ENCODE measurements at regions of chr2 and their contacts with region 1.

Region 1: DNA sequence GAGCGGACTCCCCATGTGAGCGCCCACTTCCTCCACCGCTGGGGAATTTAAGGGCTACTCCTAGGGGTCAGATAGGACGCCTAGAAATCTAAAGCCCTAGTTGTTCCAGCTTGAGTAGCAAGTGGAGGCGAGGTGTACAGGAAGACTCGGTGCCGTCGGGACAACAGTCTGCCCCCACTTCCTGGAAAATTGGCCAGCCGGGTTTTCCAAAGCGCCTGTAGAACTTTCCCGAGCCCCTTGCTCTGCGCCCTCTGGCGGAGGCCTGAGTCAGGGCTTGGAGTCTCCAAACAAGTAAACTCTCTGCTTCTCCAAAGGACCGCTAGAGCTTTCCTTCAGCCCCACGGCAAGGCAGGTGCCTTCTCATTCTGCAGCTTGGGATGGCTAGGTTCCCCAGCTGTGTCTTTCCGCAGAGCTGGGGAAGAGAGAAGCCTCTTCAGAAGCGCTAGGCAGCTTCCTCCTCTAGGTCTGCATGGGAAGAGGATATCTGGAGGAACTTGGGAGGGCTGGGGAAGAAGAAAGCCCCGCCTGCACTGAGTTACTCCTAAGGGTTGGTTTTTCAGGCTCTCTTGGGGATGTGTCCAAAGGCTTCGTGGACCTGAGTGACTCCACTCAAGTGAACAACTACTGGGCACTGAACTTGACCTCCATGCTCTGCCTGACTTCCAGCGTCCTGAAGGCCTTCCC is 688 bp downstream of the SPR start:
- DNase-seq: peak; percentile 84
- H3K4me3 ChIP-seq: peak overlapping the region; percentile 54 to 81 (median 73)
- H3K27ac ChIP-seq: peak overlapping the region; percentile 74
- H3K4me1 ChIP-seq: peaks cover 13% of the 10 kb centered on the region
- H3K27me3 ChIP-seq: no peaks in the 10 kb centered on the region
- CTCF ChIP-seq: peak; percentile 97 to 99
- POLR2A ChIP-seq: no peak

Region 2: DNA sequence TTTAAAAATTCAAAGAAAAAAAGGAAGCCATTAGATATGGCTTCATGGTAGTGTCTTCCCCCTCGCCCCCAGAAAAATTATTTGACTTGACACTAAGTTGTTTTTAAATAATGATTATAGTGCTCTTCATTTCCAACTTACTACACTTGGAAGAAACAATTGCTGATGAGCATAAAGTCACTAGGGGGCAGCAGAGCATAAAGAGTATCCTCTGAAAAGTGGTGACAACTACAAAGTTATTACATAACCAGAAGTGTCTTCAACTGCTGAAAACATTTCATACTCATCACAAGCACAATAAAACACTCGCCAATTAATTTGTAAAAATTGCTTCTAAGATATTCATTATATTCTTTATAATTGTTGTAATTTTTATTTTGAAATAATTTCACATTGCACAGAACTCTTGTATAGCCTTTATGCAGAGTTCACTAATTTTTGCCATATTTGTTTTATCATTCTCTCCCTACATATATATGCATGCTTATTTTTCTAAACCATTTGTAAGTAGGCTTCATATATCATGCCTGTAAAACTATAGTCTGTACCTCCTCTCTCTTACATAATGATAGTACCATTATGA is 116.9 kb before region 1 on chr2:
- CTCF ChIA-PET with region 1: interaction called, 15 read pairs
- POLR2A ChIA-PET with region 1: no interaction called
- dilution Hi-C with region 1: no loop called
- intact Hi-C with region 1: loop called (anchors 1 kb)
- DNase-seq: peak; percentile 84
- H3K4me3 ChIP-seq: no peak overlapping the region
- H3K27ac ChIP-seq: no peak overlapping the region
- H3K4me1 ChIP-seq: no peaks in the 10 kb centered on the region
- H3K27me3 ChIP-seq: no peaks in the 10 kb centered on the region
- CTCF ChIP-seq: peak; percentile 54 to 71
- POLR2A ChIP-seq: no peak

Region 3: DNA sequence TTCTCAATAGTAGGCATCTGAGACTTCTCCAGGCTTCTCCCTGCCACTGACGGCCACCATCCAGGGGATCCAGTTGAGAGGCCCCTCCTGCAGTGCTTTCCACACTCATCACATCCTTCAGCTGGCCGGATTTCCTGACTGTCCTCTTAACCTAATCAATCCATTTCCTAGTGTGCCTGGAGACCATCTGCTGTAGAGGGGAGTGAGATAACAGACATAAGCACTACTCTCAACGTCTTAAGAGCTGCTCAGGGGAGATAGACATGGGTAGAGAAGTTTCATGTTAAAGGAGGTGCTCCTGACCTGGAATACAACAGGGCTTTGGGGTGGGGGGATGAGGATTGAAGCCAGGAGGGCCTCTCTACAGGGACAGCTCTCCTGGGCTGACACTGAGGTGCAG is 13.5 kb after region 1 on chr2:
- CTCF ChIA-PET with region 1: interaction called, 13 read pairs
- POLR2A ChIA-PET with region 1: no interaction called
- dilution Hi-C with region 1: no loop called
- intact Hi-C with region 1: no loop called
- DNase-seq: no peak
- H3K4me3 ChIP-seq: no peak overlapping the region
- H3K27ac ChIP-seq: no peak overlapping the region
- H3K4me1 ChIP-seq: peaks cover 1% of the 10 kb centered on the region
- H3K27me3 ChIP-seq: peaks cover 26 to 51% of the 10 kb centered on the region in 2 experiments
- CTCF ChIP-seq: no peak
- POLR2A ChIP-seq: no peak

Region 4: DNA sequence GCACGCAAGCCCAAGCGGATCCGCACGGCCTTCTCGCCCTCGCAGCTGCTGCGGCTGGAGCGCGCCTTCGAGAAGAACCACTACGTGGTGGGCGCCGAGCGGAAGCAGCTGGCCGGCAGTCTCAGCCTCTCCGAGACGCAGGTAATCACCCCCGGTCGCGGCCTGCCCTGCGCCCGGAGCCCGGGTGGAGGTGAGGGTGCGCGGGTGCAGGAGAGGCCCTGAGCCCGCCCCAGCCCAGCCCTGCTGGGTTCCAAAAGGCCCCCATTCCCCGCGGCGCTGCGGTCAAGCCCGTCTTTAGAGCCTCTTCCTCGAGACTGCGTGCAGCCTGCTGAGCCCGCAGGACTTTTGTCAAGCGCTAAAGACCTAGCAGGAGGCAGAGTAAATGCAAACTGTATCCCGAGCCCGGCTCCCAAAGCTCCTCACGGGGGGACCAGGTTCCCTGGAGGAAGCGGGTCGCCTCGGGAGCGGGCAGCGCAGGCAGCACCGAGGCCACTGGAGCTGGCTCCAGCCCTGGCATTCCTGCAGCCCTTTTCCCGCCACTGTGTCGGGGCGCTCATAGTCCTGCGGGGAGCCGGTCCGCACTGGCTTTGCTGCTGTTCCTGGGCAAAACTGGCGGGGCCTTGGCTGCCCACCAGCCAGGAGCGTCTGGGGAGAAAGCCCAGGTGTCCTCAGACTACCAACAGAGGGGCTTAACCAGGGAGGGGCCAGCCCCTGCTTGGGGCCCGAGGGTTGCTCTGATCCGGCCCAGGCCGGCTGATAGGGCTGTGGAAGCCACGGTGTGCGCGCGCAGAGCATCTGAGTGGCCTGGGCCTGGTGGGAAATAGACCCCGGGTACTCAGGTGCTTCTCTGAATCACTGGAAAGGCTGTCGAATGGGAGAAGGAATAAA is 36.7 kb after region 1 on chr2:
- CTCF ChIA-PET with region 1: interaction called, 25 read pairs
- POLR2A ChIA-PET with region 1: no interaction called
- dilution Hi-C with region 1: no loop called
- intact Hi-C with region 1: loop called (anchors 2 kb)
- DNase-seq: no peak
- H3K4me3 ChIP-seq: no peak overlapping the region
- H3K27ac ChIP-seq: no peak overlapping the region
- H3K4me1 ChIP-seq: peaks cover 3% of the 10 kb centered on the region
- H3K27me3 ChIP-seq: peaks cover 93 to 100% of the 10 kb centered on the region in 2 experiments
- CTCF ChIP-seq: no peak
- POLR2A ChIP-seq: no peak

Region 5: GRCh38 chr2:72973566-72974435 is 85.9 kb after region 1 on chr2:
- CTCF ChIA-PET with region 1: interaction called, 178 read pairs
- POLR2A ChIA-PET with region 1: no interaction called
- dilution Hi-C with region 1: no loop called
- intact Hi-C with region 1: loop called (anchors 1 kb)
- DNase-seq: peak; percentile 46
- H3K4me3 ChIP-seq: no peak overlapping the region
- H3K27ac ChIP-seq: no peak overlapping the region
- H3K4me1 ChIP-seq: no peaks in the 10 kb centered on the region
- H3K27me3 ChIP-seq: no peaks in the 10 kb centered on the region
- CTCF ChIP-seq: peak; percentile 80 to 92
- POLR2A ChIP-seq: no peak

Region 6: GRCh38 chr2:73085691-73086360 is 197.9 kb after region 1 on chr2:
- CTCF ChIA-PET with region 1: interaction called, 18 read pairs
- POLR2A ChIA-PET with region 1: no interaction called
- dilution Hi-C with region 1: no loop called
- intact Hi-C with region 1: loop called (anchors 1 kb)
- DNase-seq: peak; percentile 76
- H3K4me3 ChIP-seq: no peak overlapping the region
- H3K27ac ChIP-seq: no peak overlapping the region
- H3K4me1 ChIP-seq: peaks cover 31% of the 10 kb centered on the region
- H3K27me3 ChIP-seq: no peaks in the 10 kb centered on the region
- CTCF ChIP-seq: peak; percentile 95 to 96
- POLR2A ChIP-seq: no peak

Region 7: GRCh38 chr2:73212448-73213176 is 324.7 kb after region 1 on chr2:
- CTCF ChIA-PET with region 1: interaction called, 100 read pairs
- POLR2A ChIA-PET with region 1: no interaction called
- dilution Hi-C with region 1: no loop called
- intact Hi-C with region 1: loop called (anchors 1 kb)
- DNase-seq: peak; percentile 77
- H3K4me3 ChIP-seq: no peak overlapping the region
- H3K27ac ChIP-seq: no peak overlapping the region
- H3K4me1 ChIP-seq: peaks cover 9% of the 10 kb centered on the region
- H3K27me3 ChIP-seq: peaks cover 0 to 5% of the 10 kb centered on the region in 2 experiments
- CTCF ChIP-seq: peak; percentile 96 to 99
- POLR2A ChIP-seq: no peak

Region 8: GRCh38 chr2:73314441-73314840 is 426.5 kb after region 1 on chr2:
- CTCF ChIA-PET with region 1: no interaction called
- POLR2A ChIA-PET with region 1: no interaction called
- dilution Hi-C with region 1: no loop called
- intact Hi-C with region 1: no loop called
- DNase-seq: no peak
- H3K4me3 ChIP-seq: no peak overlapping the region
- H3K27ac ChIP-seq: no peak overlapping the region
- H3K4me1 ChIP-seq: no peaks in the 10 kb centered on the region
- H3K27me3 ChIP-seq: peaks cover 5 to 13% of the 10 kb centered on the region in 2 experiments
- CTCF ChIP-seq: no peak
- POLR2A ChIP-seq: no peak

Measured in endothelial cell of umbilical vein (primary cell).